ENCODE measurements at regions of chr4 and their contacts with region 1.

Region 1: DNA sequence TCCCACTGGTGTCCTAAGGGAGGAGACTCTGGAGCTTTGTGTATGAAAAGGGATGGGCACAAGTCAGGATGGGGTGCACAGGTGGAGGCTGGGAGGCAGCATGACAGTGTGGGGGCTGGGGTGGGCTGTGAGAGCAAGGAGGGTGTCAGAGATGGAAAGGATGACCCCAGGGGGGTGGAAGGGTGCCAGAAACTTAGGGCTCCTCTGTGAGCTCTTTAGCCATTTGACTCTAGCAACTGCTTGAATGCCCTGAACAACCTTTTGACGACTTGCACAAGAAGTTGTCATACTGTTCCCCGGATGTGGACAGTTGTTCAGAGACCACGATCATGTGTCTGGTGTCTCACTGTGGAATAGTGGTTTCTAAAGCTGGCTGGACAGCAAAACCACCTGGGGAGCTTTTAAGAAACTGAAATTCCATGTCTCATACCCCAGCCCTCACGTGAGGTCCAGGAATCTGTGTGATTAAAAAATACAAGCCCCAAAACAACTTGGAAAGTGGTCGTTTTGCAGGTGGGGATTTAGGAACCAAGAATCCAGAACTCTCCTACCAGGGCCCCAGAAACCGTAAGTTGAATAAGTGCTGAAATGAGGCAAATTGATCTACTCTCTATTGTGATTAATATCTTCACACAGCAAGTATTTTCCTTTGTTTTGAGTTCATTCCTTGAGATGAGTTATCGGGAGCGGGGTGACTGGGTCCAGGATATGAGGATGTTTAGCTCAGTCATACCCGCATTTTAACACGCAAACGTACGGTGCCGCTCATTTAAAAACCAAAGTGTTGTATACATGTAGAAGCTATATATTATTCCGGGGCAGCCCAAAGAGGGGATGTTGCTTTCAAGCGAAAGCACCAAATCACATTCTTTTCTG is 3.4 kb downstream of the RHOH start:
- DNase-seq: peak; percentile 94
- ATAC-seq: peak; percentile 50
- H3K4me3 Mint-ChIP-seq: peak overlapping the region; percentile 99
- H3K27ac Mint-ChIP-seq: peak overlapping the region; percentile 99
- H3K4me1 Mint-ChIP-seq: peaks cover 23% of the 10 kb centered on the region
- H3K27me3 Mint-ChIP-seq: no peaks in the 10 kb centered on the region
- CTCF ChIP-seq: no peak

Region 2: GRCh38 chr4:40056716-40057585 is 143.3 kb before region 1 on chr4 and contains the start of gene N4BP2:
- CTCF ChIA-PET with region 1: interaction called, 9 read pairs
- POLR2A ChIA-PET with region 1: interaction called, 17 read pairs
- intact Hi-C with region 1: loop called (anchors 5 kb)
- DNase-seq: peak; percentile 77
- ATAC-seq: peak; percentile 59
- H3K4me3 Mint-ChIP-seq: peak within 1 kb of the TSS; percentile 96
- H3K27ac Mint-ChIP-seq: peak within 1 kb of the TSS; percentile 97
- H3K4me1 Mint-ChIP-seq: peaks cover 32% of the 10 kb centered on the region
- H3K27me3 Mint-ChIP-seq: peaks cover 6% of the 10 kb centered on the region
- CTCF ChIP-seq: peak; percentile 75
- total RNA-seq, gene N4BP2: 17.4 to 17.5 TPM

Region 3: DNA sequence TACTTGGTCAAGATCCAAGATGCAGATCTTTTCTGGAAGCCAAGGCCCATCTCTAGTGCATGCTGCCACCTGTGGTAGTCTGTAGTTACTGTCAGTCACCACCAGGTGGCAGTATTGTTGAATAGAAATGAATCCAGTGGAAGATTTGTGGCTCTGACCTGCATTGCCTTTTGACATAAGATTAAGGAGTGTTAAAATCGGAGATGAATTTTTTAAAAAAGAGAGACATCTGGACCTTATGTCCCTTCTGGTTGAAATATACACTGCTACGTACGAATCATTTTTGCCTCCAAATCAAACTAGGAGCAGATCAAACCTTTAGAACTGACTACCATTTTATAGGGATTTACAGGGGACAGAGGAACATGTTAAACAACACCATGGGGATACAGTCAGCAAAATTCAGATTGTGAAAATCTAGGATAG is 50.3 kb before region 1 on chr4:
- CTCF ChIA-PET with region 1: interaction called, 6 read pairs
- POLR2A ChIA-PET with region 1: interaction called, 24 read pairs
- intact Hi-C with region 1: no loop called
- DNase-seq: peak; percentile 83
- ATAC-seq: peak; percentile 98
- H3K4me3 Mint-ChIP-seq: no peak overlapping the region
- H3K27ac Mint-ChIP-seq: peak overlapping the region; percentile 68
- H3K4me1 Mint-ChIP-seq: peaks cover 41% of the 10 kb centered on the region
- H3K27me3 Mint-ChIP-seq: no peaks in the 10 kb centered on the region
- CTCF ChIP-seq: peak; percentile 95

Region 4: DNA sequence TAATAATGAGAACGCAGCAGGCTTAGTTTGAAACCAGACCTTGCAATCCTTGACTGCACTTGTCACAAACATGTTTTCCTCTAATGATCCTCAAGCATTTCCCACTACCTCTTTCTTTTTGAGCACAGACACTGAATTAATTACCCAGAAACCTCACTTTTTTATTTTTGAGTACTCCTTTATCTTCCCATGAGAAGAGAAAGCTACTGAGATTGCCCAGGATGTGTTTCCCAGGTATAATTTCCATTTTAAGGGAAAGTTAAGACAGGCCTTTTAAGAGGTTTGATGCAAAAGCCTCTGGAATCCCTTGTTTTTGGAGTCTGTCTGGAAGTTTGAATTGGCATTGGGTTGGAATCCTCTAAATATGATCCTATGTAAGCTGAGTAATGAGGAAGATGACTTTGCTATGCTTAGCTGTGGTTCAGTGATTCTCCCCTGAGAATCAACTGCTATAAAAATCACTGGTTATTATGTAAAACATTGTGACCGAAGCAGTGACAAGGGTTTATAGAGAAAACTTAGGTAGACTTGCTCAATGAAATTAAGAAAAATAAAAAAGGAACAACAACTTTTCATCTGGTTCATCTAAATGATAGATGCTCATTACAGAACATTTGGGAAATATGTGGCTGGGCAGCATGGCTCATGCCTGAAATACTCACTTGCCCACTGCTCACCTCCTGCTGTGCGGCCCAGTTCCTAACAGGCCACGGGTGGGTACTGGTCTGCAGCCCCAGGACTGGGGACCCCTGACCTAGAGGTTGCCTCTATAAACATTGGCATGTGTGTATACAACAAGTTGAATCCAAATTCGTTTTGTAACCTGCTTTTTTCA is 14.2 kb before region 1 on chr4:
- CTCF ChIA-PET with region 1: interaction called, 10 read pairs
- POLR2A ChIA-PET with region 1: interaction called, 447 read pairs
- intact Hi-C with region 1: no loop called
- DNase-seq: no peak
- ATAC-seq: no peak
- H3K4me3 Mint-ChIP-seq: no peak overlapping the region
- H3K27ac Mint-ChIP-seq: no peak overlapping the region
- H3K4me1 Mint-ChIP-seq: peaks cover 50% of the 10 kb centered on the region
- H3K27me3 Mint-ChIP-seq: no peaks in the 10 kb centered on the region
- CTCF ChIP-seq: no peak

Region 5: DNA sequence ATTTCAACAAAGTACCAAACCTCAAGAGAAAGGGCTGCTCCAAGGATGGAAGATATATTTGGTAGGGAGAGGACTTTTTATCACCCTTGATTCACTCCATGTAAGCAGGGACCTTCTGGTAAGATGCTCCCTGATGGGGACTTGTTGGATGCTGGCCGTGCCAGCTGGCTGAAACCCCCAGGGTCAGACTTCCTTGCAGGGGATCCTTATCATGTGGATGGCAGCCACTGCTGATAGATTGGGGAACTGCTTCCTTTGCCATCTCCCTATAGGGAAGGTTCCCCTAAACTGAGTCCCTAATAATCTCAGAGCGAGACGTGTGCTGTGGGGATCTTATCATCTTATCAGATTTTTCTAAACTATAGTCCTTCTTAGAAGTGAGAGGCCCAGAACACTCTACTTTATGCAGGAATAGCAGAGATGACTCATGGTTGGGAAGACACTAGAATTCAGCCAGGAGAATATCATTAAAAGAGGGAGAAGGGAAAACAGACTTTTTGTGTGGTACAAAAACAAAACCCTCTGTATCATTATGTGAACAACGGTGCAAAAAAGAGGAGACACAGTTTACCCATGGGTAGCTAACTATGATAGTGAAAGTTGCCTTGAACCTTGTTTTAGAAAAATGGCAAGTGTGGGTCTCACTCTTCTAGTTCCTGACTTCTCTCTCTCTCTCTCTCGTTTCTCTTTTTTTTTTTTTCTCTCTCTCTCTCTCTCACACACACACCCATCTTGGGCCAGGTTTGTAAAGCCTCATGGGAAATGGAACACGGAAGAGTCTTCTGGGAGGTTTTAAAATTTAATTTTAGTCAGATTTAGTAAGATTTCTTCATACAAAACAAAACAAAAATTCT is 12.7 kb after region 1 on chr4:
- CTCF ChIA-PET with region 1: interaction called, 15 read pairs
- POLR2A ChIA-PET with region 1: interaction called, 447 read pairs
- intact Hi-C with region 1: no loop called
- DNase-seq: peak; percentile 4
- ATAC-seq: peak; percentile 24
- H3K4me3 Mint-ChIP-seq: peak overlapping the region; percentile 99
- H3K27ac Mint-ChIP-seq: peak overlapping the region; percentile 96
- H3K4me1 Mint-ChIP-seq: peaks cover 74% of the 10 kb centered on the region
- H3K27me3 Mint-ChIP-seq: no peaks in the 10 kb centered on the region
- CTCF ChIP-seq: no peak

Region 6: GRCh38 chr4:40228497-40229365 is 28.5 kb after region 1 on chr4:
- CTCF ChIA-PET with region 1: interaction called, 97 read pairs
- POLR2A ChIA-PET with region 1: interaction called, 295 read pairs
- intact Hi-C with region 1: loop called (anchors 2 kb)
- DNase-seq: peak; percentile 74
- ATAC-seq: peak; percentile 35
- H3K4me3 Mint-ChIP-seq: peak overlapping the region; percentile 64
- H3K27ac Mint-ChIP-seq: peak overlapping the region; percentile 96
- H3K4me1 Mint-ChIP-seq: peaks cover 86% of the 10 kb centered on the region
- H3K27me3 Mint-ChIP-seq: no peaks in the 10 kb centered on the region
- CTCF ChIP-seq: peak; percentile 70

Region 7: GRCh38 chr4:40247350-40247749 is 47.1 kb after region 1 on chr4:
- CTCF ChIA-PET with region 1: interaction called, 4 read pairs
- POLR2A ChIA-PET with region 1: interaction called, 295 read pairs
- intact Hi-C with region 1: no loop called
- DNase-seq: peak; percentile 80
- ATAC-seq: peak; percentile 55
- H3K4me3 Mint-ChIP-seq: peak overlapping the region; percentile 77
- H3K27ac Mint-ChIP-seq: peak overlapping the region; percentile 95
- H3K4me1 Mint-ChIP-seq: peaks cover 75% of the 10 kb centered on the region
- H3K27me3 Mint-ChIP-seq: no peaks in the 10 kb centered on the region
- CTCF ChIP-seq: no peak

Region 8: GRCh38 chr4:40409835-40410234 is 209.6 kb after region 1 on chr4:
- CTCF ChIA-PET with region 1: no interaction called
- POLR2A ChIA-PET with region 1: no interaction called
- intact Hi-C with region 1: no loop called
- DNase-seq: no peak
- ATAC-seq: no peak
- H3K4me3 Mint-ChIP-seq: no peak overlapping the region
- H3K27ac Mint-ChIP-seq: no peak overlapping the region
- H3K4me1 Mint-ChIP-seq: peaks cover 5% of the 10 kb centered on the region
- H3K27me3 Mint-ChIP-seq: no peaks in the 10 kb centered on the region
- CTCF ChIP-seq: no peak

Measured in activated CD8-positive, alpha-beta T cell treated with anti-CD3 and anti-CD28 coated beads for 36 hours (primary cell).